ENCODE measurements at regions of chr14 and their contacts with region 1.

Region 1: DNA sequence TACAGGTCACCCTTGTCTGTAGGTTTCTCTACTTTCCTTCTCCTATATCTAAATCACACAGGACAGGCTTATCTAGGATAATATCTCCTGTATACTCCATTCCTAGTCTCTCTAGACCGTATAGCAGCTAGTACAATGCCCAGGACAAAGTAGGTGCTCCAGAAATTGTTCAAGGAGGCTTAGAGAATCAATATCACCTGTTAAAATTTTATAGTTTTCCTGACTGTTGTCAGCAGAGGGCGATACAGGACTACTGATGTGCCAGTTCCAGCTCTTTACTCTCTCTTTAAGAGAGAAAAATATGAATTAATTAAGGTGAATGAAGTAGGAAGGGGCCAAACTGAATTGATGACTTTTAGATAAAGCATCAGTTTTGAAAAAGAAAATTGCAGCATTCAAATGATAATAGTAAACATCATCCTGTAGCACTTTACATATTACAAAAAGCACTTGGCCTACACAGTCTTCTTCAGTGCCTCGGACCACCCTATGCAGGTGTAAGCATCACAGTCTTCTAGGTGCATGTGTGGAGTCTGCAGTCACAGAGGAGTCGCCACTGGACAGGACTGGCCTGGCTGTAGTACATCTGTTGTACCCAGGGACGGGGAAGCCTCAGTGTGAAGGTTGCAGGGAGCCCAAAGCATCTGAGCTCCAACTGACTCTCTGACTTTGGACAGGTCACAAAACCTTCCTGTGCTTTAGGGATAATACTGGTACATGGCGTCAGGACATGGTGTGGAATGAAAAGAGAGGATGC is 61.9 kb upstream of the MAX start:
- DNase-seq: no peak
- H3K4me3 ChIP-seq: no peak overlapping the region
- H3K27ac ChIP-seq: no peak overlapping the region
- H3K4me1 ChIP-seq: no peaks in the 10 kb centered on the region
- H3K27me3 ChIP-seq: no peaks in the 10 kb centered on the region
- CTCF ChIP-seq: peak; percentile 55 to 70 (median 63)
- EP300 ChIP-seq: no peak
- POLR2A ChIP-seq: no peak

Region 2: GRCh38 chr14:65084554-65085505 is 79.4 kb before region 1 on chr14:
- in situ Hi-C with region 1: no loop called
- intact Hi-C with region 1: no loop called
- DNase-seq: no peak
- H3K4me3 ChIP-seq: no peak overlapping the region
- H3K27ac ChIP-seq: no peak overlapping the region
- H3K4me1 ChIP-seq: peaks cover 25 to 54% (median 25%) of the 10 kb centered on the region in 4 donors
- H3K27me3 ChIP-seq: no peaks in the 10 kb centered on the region
- CTCF ChIP-seq: no peak
- EP300 ChIP-seq: no peak
- POLR2A ChIP-seq: no peak

Region 3: GRCh38 chr14:65263177-65263788 is 99.0 kb after region 1 on chr14:
- in situ Hi-C with region 1: no loop called
- intact Hi-C with region 1: no loop called
- DNase-seq: no peak
- H3K4me3 ChIP-seq: no peak overlapping the region
- H3K27ac ChIP-seq: no peak overlapping the region
- H3K4me1 ChIP-seq: no peaks in the 10 kb centered on the region
- H3K27me3 ChIP-seq: no peaks in the 10 kb centered on the region
- CTCF ChIP-seq: no peak
- EP300 ChIP-seq: no peak
- POLR2A ChIP-seq: no peak

Region 4: DNA sequence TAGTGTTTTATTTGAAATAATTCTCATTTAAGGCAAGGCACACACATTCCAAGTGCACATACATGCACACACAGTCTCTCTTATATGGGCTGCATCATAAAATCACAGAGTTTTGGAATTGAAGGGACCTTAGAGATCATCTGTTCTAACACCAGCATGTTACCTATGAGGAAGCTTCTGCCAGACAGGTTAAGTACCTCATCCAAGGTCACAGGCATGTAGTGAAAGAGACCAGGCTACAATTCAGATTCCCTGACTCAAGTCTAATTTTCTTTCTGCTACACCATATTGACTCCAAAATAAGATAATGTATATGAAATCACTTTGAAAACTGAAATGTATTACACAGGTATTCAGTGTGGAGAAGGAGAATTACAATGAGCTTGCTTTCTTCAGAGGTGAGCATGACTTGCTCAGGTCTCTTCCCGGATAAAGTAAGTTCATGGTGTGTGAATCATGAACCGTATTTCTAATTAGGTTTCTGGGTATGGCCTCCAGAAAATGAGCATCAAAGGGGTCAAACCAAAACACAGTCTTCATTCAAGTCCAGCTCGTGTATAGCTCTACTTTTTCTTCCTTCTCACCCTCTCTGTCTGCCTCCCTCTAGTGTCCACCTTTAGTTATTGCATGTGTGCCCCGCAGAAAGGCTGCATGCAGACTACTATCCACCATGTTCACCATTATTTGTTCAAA is 660.2 kb after region 1 on chr14:
- in situ Hi-C with region 1: loop called in 3 of 4 experiments (anchors 10 to 25 kb)
- intact Hi-C with region 1: loop called (anchors 10 kb)
- DNase-seq: peak; percentile 61
- H3K4me3 ChIP-seq: no peak overlapping the region
- H3K27ac ChIP-seq: no peak overlapping the region
- H3K4me1 ChIP-seq: peaks cover 0 to 4% (median 0%) of the 10 kb centered on the region in 4 donors
- H3K27me3 ChIP-seq: no peaks in the 10 kb centered on the region
- CTCF ChIP-seq: peak; percentile 91 to 95 (median 92)
- EP300 ChIP-seq: no peak
- POLR2A ChIP-seq: no peak

Region 5: GRCh38 chr14:65832431-65833266 is 668.4 kb after region 1 on chr14:
- in situ Hi-C with region 1: loop called in 3 of 4 experiments (anchors 10 to 25 kb)
- intact Hi-C with region 1: loop called (anchors 10 kb)
- DNase-seq: no peak
- H3K4me3 ChIP-seq: no peak overlapping the region
- H3K27ac ChIP-seq: no peak overlapping the region
- H3K4me1 ChIP-seq: peaks cover 0 to 4% (median 0%) of the 10 kb centered on the region in 4 donors
- H3K27me3 ChIP-seq: no peaks in the 10 kb centered on the region
- CTCF ChIP-seq: no peak
- EP300 ChIP-seq: no peak
- POLR2A ChIP-seq: no peak

Region 6: GRCh38 chr14:65958664-65959562 is 794.7 kb after region 1 on chr14:
- in situ Hi-C with region 1: loop called (anchors 10 to 25 kb)
- intact Hi-C with region 1: loop called (anchors 10 kb)
- DNase-seq: no peak
- H3K4me3 ChIP-seq: no peak overlapping the region
- H3K27ac ChIP-seq: no peak overlapping the region
- H3K4me1 ChIP-seq: peaks cover 0 to 9% (median 4%) of the 10 kb centered on the region in 4 donors
- H3K27me3 ChIP-seq: no peaks in the 10 kb centered on the region
- CTCF ChIP-seq: peak; percentile 44 to 59 (median 51)
- EP300 ChIP-seq: no peak
- POLR2A ChIP-seq: no peak

Region 7: DNA sequence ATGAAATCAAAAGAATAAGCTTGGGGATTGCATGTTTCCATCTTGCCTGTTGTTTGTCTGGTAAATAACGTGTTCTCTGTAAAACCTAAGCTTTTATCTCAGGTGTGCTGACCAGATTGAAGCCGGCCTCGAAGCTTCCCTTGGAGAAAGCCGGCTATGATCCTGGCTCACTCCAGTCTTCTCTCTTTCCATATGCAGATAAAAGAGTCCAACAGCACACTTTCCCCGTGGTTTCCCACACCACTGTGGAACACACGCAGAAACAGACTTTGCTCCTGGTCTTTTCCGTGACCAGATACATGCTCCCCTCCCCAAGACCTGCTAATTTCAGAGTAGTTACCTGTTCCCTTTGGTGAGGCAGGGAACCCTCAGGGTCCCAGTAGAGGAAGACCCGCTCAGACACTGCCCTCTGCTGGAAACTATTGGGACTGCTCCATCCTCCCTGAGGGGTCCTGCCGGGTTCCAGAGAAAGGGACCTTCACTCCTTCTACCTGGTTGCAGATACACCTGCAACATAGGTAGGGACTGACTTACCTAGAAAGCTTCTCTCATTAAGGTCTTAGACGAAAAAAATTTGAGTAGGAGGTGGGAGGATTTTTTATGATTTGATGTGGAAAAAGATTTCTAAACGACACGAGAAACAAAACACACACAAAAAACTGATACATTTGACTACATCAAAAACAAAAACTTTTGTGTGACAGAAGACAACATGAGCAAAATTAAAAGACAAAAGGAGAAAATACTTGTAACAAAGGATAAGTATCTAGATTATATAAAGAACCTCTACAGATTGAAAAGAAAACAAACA is 906.5 kb after region 1 on chr14:
- in situ Hi-C with region 1: loop called in 3 of 4 experiments (anchors 10 to 25 kb)
- intact Hi-C with region 1: no loop called
- DNase-seq: peak; percentile 60
- H3K4me3 ChIP-seq: no peak overlapping the region
- H3K27ac ChIP-seq: no peak overlapping the region
- H3K4me1 ChIP-seq: no peaks in the 10 kb centered on the region
- H3K27me3 ChIP-seq: no peaks in the 10 kb centered on the region
- CTCF ChIP-seq: peak; percentile 69 to 84 (median 75)
- EP300 ChIP-seq: no peak
- POLR2A ChIP-seq: no peak